Esophagus muscularis mucosa (tissue), 4 donors: ENCODE measurements at regions of chr12 and their contacts with region 1.

Region 1: GRCh38 chr12:56636675-56637540 is 6.8 kb upstream of the BAZ2A start:
- DNase-seq: peak; percentile 100
- H3K4me3 ChIP-seq: peak overlapping the region; percentile 78 to 89 (median 83)
- H3K27ac ChIP-seq: peak overlapping the region; percentile 88 to 95 (median 94)
- H3K4me1 ChIP-seq: peaks cover 40 to 82% (median 70%) of the 10 kb centered on the region in 4 donors
- H3K27me3 ChIP-seq: no peaks in the 10 kb centered on the region
- CTCF ChIP-seq: peak; percentile 56 to 64 (median 63)
- EP300 ChIP-seq: no peak
- POLR2A ChIP-seq: no peak

Region 2: GRCh38 chr12:56127888-56128669 is 508.8 kb before region 1 on chr12 and contains the start of gene ESYT1:
- intact Hi-C with region 1: loop called (anchors 10 kb)
- DNase-seq: peak; percentile 100
- H3K4me3 ChIP-seq: peak within 1 kb of the TSS; percentile 78 to 91 (median 87)
- H3K27ac ChIP-seq: peak within 1 kb of the TSS; percentile 94 to 98 (median 98)
- H3K4me1 ChIP-seq: peaks cover 40 to 60% (median 52%) of the 10 kb centered on the region in 4 donors
- H3K27me3 ChIP-seq: no peaks in the 10 kb centered on the region
- CTCF ChIP-seq: peak in 1 of 3 experiments; percentile 13
- EP300 ChIP-seq: no peak
- POLR2A ChIP-seq: peak; percentile 96
- total RNA-seq, gene ESYT1: 151 to 245 (median 214) TPM

Region 3: DNA sequence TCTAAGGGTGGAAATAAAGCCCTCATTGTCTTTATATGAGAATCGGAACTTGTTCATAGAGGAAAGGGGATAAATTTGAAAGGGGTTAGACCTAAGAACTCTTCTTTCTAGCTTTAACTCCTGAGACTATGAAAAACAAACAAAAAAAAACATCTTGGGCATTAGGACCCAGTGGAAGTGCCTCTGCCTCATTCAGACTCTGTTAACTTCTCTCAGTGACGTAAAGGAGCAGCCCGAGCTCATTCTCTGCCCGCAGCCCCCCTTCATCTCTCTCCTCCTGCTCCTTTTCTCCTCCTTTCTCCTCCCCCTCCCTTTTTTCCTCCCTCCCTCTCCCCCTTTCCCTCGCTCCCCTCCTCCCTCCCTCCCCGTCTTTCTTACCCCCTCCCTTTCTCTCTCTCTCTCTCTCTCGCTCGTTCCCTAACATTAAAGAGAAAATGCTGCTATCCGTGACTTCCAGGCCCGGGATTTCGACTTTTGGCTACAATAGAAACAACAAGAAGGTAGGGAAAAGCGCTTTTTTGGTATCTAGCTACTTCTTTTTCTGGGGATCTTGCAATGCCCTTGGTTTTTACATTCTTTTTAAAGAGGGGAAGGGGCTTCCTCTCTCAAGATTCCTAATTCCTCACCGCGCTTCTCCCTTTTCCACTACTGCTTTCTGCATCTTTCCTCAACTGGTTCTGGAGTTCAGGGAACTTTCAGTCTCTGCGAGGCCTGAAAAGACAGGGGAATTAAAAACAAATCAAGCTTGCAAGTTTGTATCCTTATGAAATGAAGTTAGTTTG is 115.1 kb before region 1 on chr12 and contains the start of gene RBMS2:
- intact Hi-C with region 1: loop called (anchors 2 kb)
- DNase-seq: no peak
- H3K4me3 ChIP-seq: peak within 1 kb of the TSS; percentile 51 to 68 (median 62)
- H3K27ac ChIP-seq: peak within 1 kb of the TSS; percentile 85 to 92 (median 86)
- H3K4me1 ChIP-seq: peaks cover 20 to 65% (median 54%) of the 10 kb centered on the region in 4 donors
- H3K27me3 ChIP-seq: no peaks in the 10 kb centered on the region
- CTCF ChIP-seq: peak in 1 of 3 experiments; percentile 11
- EP300 ChIP-seq: no peak
- POLR2A ChIP-seq: no peak
- total RNA-seq, gene RBMS2: 31.6 to 49.4 (median 40.4) TPM

Region 4: DNA sequence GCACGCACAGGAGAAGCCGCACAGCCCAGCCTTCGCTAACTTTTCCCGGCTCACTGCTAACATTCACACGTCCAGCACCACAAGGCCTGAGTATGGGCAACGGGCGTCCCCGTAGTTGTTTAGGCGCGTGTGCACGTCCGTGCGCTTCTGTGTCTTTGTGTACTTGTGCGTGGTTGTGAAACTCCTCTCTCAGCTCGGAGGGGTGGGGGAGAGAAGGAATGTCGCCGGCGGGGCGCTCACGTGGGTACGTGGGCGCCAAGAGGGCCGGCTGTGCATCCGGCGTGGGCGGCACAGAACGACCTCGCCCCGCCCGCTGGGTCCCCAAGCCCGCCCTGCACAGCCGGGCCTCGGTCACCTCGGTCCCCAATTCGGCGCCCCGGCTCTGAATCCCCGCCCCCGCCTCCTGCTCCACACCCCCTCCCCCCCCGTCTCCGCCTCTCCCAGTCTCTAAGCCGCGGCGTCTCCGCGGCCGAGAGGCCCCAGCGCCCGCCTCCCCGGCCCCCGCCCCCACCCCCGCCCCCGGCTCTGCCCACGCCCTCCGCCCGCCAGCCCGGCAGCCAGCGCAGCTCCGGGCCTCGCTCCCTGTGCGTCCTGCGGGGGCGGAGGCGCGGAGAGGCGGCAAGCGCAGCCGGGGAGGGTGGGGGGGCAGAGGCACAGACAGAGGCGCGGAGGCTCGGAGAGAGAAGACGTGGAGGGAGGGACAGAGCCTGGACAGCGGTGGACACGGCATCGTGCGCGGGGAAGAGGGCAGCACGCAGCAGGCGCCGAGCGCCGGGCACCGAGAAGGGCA is 451.7 kb after region 1 on chr12 and contains the start of gene NAB2:
- intact Hi-C with region 1: loop called (anchors 10 kb)
- DNase-seq: peak; percentile 98
- H3K4me3 ChIP-seq: peak within 1 kb of the TSS; percentile 88 to 96 (median 92)
- H3K27ac ChIP-seq: peak within 1 kb of the TSS; percentile 99 to 100 (median 100)
- H3K4me1 ChIP-seq: peaks cover 47 to 65% (median 62%) of the 10 kb centered on the region in 4 donors
- H3K27me3 ChIP-seq: no peaks in the 10 kb centered on the region
- CTCF ChIP-seq: no peak
- EP300 ChIP-seq: no peak
- POLR2A ChIP-seq: peak; percentile 69
- total RNA-seq, gene NAB2: 21.6 to 41.5 (median 35.1) TPM